A549 (cell line): ENCODE measurements at regions of chr1 and their contacts with region 1.

Region 1: DNA sequence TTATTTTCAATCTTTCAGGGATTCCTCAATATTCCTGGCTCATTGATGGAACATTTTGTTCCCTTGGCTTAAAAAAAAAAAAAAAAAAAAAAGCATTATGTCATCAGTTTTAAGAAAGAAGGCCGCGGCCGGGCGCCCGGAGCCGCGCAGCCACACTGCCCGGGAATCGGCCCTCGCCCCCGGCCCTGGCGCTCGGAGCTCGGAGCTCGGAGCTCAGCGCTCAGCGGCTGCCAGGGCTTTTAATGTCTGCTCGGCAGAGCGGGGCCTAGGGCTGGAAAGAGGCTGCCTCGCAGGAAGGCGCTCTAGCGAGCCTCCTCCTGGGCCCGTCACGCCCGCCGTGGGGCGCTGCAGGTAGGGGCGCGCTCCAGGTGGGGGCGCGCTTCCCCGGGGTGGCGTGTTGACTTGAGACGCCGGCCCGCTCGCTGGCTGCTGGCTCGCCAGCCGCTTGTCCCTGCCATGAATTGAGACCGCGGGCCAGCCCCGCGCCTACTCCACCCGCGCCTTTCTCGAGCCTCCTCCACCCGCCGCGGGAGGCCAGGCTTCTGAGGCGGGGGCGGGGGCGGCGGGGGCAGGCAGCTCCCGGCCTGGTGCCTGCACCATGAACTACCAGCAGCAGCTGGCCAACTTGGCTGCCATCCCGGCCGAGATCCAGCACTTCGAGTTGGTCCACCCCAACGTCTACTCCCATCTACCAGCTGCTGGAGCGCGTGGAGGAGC is 5.4 kb upstream of the TDRD5 start:
- DNase-seq: peak; percentile 44 to 81
- ATAC-seq: peak; percentile 91 to 94
- H3K4me3 ChIP-seq: peak overlapping the region; percentile 50
- H3K27ac ChIP-seq: peak overlapping the region; percentile 60 to 77; a peak in 5 of 6 replicates
- H3K4me1 ChIP-seq: no peaks in the 10 kb centered on the region
- CTCF ChIP-seq: peak; percentile 79
- EP300 ChIP-seq: no peak
- POLR2A ChIP-seq: no peak
- RAD21 ChIP-seq: no peak; a peak in 1 of 5 replicates

Region 2: GRCh38 chr1:179105350-179105749 is 480.9 kb before region 1 on chr1:
- CTCF ChIA-PET with region 1: no interaction called
- POLR2A ChIA-PET with region 1: no interaction called
- DNase-seq: peak; percentile 55
- ATAC-seq: peak; percentile 62 to 76
- H3K4me3 ChIP-seq: no peak overlapping the region
- H3K27ac ChIP-seq: no peak overlapping the region
- H3K4me1 ChIP-seq: no peaks in the 10 kb centered on the region
- CTCF ChIP-seq: peak; percentile 29; the same call in 1 of the 3 replicates
- EP300 ChIP-seq: no peak
- POLR2A ChIP-seq: no peak
- RAD21 ChIP-seq: peak in 1 of 2 experiments; percentile 54; a peak in 2 of 5 replicates

Region 3: GRCh38 chr1:179599623-179600249 is 13.5 kb after region 1 on chr1:
- CTCF ChIA-PET with region 1: interaction called, 24 read pairs
- POLR2A ChIA-PET with region 1: no interaction called
- DNase-seq: peak; percentile 20 to 64
- ATAC-seq: peak; percentile 91 to 95
- H3K4me3 ChIP-seq: no peak overlapping the region
- H3K27ac ChIP-seq: no peak overlapping the region
- H3K4me1 ChIP-seq: no peaks in the 10 kb centered on the region
- CTCF ChIP-seq: peak; percentile 59
- EP300 ChIP-seq: no peak
- POLR2A ChIP-seq: no peak
- RAD21 ChIP-seq: peak; percentile 39 to 61